ENCODE measurements at regions of chr5 and their contacts with region 1.

Region 1: GRCh38 chr5:14685757-14686156 is 21.2 kb downstream of the OTULIN start:
- DNase-seq: peak; percentile 53
- H3K4me3 ChIP-seq: no peak overlapping the region
- H3K27ac ChIP-seq: peak overlapping the region; percentile 30
- H3K4me1 ChIP-seq: peaks cover 20% of the 10 kb centered on the region
- H3K27me3 ChIP-seq: no peaks in the 10 kb centered on the region
- CTCF ChIP-seq: peak; percentile 52 to 74

Region 2: DNA sequence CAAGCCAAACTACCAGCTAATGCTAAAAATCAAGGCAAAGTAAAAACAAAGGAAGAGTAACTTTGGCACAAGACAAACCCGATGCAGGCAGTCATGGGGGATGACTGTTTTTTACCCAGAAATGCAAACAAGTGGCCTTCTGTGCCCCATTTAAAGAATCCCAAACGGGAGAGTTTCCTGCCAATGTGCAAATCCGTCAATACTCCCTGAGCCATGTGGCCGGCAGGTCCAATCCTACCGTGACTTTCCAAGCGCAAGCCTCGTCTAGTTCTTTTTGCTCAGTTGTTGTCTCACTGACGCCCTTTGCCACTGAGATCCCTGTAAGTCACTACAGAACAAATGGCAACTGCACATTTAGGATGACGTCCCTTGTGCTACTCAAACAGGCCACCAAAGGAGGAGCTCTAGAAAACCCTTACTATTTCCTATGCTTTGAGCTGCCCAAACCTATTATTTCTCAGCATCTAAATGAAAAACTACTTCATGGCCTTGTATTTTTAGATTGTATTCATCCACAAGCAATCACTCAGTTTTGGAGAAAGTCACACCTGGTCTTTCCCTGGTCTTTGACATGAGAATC is 22.1 kb after region 1 on chr5:
- CTCF ChIA-PET with region 1: no interaction called
- dilution Hi-C with region 1: no loop called
- in situ Hi-C with region 1: no loop called
- intact Hi-C with region 1: no loop called
- DNase-seq: no peak
- H3K4me3 ChIP-seq: no peak overlapping the region
- H3K27ac ChIP-seq: no peak overlapping the region
- H3K4me1 ChIP-seq: peaks cover 7% of the 10 kb centered on the region
- H3K27me3 ChIP-seq: no peaks in the 10 kb centered on the region
- CTCF ChIP-seq: no peak

Region 3: DNA sequence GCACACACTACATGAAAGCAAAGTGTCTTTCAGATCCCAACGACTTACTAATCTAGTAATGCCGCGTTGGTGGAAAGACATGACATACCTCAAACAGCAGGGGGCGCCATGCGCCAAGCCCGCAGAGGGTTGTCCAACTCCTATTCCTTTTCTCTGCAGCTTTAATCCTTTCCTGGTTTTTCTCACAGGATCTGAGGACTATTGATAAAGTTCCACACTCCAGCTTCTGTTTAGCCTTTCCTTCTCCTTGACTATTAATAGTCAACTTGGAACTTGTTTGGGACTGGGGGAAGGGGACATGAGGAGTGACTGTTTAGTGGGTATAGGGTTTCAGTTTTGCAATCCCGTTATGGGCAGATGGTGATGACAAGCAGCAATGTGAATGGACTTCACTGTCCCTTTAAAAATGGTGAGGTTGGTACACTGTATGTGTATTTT is 41.7 kb after region 1 on chr5:
- CTCF ChIA-PET with region 1: no interaction called
- dilution Hi-C with region 1: no loop called
- in situ Hi-C with region 1: no loop called
- intact Hi-C with region 1: loop called (anchors 1 kb)
- DNase-seq: peak; percentile 58
- H3K4me3 ChIP-seq: no peak overlapping the region
- H3K27ac ChIP-seq: no peak overlapping the region
- H3K4me1 ChIP-seq: no peaks in the 10 kb centered on the region
- H3K27me3 ChIP-seq: no peaks in the 10 kb centered on the region
- CTCF ChIP-seq: peak; percentile 94 to 95

Region 4: DNA sequence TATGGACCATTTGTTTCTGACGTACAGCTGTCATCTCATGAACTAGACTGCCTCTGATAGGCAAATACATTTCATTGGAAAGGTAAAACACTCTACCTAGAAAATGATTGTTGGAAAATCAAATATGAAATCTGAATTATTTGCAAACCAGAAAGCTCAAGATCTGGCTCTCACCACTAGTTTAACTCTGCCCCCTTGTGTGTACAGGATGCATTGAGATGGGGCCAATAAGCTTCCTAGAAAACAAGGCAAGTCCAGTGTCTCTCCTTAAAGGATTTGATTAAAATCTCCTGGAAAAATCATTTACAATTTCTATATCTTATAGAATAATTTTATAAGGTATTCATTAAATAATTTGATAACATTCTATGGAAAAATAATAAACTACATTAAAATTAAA is 497.8 kb after region 1 on chr5:
- CTCF ChIA-PET with region 1: no interaction called
- dilution Hi-C with region 1: no loop called
- in situ Hi-C with region 1: no loop called
- intact Hi-C with region 1: loop called (anchors 10 kb)
- DNase-seq: no peak
- H3K4me3 ChIP-seq: no peak overlapping the region
- H3K27ac ChIP-seq: no peak overlapping the region
- H3K4me1 ChIP-seq: no peaks in the 10 kb centered on the region
- H3K27me3 ChIP-seq: no peaks in the 10 kb centered on the region
- CTCF ChIP-seq: peak in 1 of 2 donors; percentile 6

Measured in mammary epithelial cell (primary cell).